GM10248 (cell line): ENCODE measurements at regions of chr10 and their contacts with region 1.

Region 1: GRCh38 chr10:62405137-62405536 is 31.0 kb downstream of the ZNF365 start:
- DNase-seq: no peak
- CTCF ChIP-seq: no peak

Region 2: DNA sequence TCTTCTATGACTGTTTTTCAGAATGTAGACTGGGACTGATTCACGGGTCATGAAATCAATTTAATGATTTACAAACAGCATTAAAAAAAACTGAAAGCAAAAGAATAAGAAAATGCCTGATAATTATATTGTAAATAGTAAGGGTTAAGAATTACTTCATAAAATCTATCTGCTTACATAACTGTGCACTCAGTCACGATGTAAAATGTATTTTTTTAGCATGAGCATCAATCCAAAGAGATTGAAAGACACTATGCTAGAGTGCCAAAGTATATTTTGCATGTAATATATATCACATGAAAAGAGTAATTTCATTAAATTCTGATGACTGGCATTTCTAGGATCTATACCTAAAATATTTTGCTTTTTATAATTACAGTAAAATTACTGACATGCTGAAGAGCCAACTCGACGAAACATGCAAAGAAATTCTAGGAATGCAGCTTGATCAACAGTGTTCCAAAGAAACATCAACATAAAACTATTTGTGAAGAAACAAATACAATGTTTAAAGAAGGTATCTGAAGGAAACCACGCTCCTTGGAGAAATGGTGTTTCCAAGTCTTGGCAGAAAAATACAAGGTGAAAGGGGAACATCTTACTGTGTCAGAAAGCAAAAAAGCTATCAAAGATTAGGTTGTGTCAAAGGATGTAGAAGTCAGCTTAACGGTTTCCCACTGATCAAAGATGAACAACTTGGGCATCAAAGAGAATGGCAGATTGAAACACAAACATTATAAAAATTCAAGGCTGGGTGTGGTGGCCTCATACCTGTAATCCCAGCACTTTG is 171.4 kb before region 1 on chr10:
- CTCF ChIA-PET with region 1: no interaction called
- POLR2A ChIA-PET with region 1: no interaction called
- DNase-seq: no peak
- CTCF ChIP-seq: no peak

Region 3: GRCh38 chr10:62422068-62422590 is 17.0 kb after region 1 on chr10:
- CTCF ChIA-PET with region 1: interaction called, 14 read pairs
- POLR2A ChIA-PET with region 1: no interaction called
- DNase-seq: no peak
- CTCF ChIP-seq: no peak